A673 (cell line): ENCODE measurements at regions of chr1 and their contacts with region 1.

Region 1: DNA sequence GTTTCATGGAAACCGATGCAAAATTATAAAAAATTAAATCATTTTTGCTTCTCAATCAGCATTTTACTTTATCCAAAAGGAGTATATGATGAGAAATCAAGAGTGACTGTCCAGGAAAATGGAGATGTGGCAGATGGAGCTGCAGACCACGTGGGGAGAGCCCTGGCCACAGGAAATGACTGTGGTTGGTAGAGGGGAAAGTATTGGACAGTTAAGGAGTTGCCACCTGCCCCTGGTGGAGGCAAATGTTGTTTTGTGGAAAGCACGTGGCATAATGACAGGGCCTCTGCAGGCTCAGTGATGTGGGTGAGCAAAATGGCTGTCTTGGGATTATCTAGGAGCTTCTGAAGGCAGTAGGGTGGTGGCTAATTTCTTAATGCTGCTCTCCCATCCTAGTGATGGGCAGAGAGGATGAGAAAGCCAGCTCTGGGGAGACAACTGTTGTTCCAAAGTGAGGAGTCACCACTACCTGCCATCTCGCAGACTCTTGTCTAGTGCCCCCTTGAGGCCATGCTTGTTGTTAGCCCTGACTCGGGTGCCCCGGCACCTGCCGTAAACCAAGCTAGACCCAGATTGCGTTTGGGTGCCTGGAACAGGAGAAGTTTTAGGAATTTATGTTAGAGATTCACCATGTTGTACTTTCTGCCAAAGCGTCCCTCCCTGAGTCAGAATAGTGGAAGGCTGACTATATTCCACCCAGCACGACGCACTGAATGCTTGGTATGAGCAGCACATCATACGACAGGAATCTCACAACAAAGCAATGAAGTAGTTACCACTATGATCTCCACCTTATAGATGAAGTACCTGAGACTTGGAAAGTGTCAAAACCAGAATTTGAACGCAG is 144.0 kb downstream of the ROR1 start:
- DNase-seq: peak; percentile 50
- H3K4me3 ChIP-seq: no peak overlapping the region
- H3K27ac ChIP-seq: no peak overlapping the region
- H3K4me1 ChIP-seq: peaks cover 20% of the 10 kb centered on the region
- H3K27me3 ChIP-seq: no peaks in the 10 kb centered on the region
- CTCF ChIP-seq: peak; percentile 64

Region 2: GRCh38 chr1:63615768-63616420 is 301.9 kb before region 1 on chr1:
- CTCF ChIA-PET with region 1: no interaction called
- POLR2A ChIA-PET with region 1: no interaction called
- intact Hi-C with region 1: loop called (anchors 5 kb)
- DNase-seq: peak; percentile 81
- H3K4me3 ChIP-seq: no peak overlapping the region
- H3K27ac ChIP-seq: no peak overlapping the region
- H3K4me1 ChIP-seq: no peaks in the 10 kb centered on the region
- H3K27me3 ChIP-seq: no peaks in the 10 kb centered on the region
- CTCF ChIP-seq: peak; percentile 73

Region 3: DNA sequence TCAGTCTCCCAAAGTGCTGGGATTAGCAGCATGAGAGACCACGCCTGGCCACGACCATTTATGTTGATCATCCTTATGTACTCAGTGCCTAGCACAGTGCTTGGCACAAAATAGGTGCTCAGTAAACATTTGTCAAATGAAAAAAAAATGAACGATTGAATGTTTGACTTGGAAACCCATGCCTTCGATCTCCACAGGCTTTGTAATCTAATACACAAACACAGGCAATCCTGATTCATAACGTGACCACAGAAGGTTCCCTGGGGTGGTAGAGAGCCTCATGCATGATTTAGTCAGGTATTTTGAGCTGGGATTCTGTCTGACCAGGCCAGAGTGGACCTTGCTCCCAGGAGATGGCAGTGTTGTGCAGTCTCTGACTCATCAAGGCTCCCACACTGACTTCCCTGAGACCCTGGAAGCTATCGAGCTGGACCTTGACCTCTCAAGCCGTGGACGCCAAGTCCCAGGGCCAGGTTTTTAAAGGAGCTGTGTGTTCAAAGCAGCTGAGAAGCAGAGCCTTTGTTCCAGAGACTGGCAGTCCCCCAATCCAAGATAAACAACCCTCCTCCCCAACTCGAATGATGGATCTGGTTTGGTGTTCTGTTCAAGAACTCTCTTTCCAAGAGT is 243.4 kb before region 1 on chr1:
- CTCF ChIA-PET with region 1: interaction called, 14 read pairs
- POLR2A ChIA-PET with region 1: no interaction called
- intact Hi-C with region 1: no loop called
- DNase-seq: peak; percentile 60
- H3K4me3 ChIP-seq: no peak overlapping the region
- H3K27ac ChIP-seq: no peak overlapping the region
- H3K4me1 ChIP-seq: no peaks in the 10 kb centered on the region
- H3K27me3 ChIP-seq: no peaks in the 10 kb centered on the region
- CTCF ChIP-seq: peak; percentile 63

Region 4: DNA sequence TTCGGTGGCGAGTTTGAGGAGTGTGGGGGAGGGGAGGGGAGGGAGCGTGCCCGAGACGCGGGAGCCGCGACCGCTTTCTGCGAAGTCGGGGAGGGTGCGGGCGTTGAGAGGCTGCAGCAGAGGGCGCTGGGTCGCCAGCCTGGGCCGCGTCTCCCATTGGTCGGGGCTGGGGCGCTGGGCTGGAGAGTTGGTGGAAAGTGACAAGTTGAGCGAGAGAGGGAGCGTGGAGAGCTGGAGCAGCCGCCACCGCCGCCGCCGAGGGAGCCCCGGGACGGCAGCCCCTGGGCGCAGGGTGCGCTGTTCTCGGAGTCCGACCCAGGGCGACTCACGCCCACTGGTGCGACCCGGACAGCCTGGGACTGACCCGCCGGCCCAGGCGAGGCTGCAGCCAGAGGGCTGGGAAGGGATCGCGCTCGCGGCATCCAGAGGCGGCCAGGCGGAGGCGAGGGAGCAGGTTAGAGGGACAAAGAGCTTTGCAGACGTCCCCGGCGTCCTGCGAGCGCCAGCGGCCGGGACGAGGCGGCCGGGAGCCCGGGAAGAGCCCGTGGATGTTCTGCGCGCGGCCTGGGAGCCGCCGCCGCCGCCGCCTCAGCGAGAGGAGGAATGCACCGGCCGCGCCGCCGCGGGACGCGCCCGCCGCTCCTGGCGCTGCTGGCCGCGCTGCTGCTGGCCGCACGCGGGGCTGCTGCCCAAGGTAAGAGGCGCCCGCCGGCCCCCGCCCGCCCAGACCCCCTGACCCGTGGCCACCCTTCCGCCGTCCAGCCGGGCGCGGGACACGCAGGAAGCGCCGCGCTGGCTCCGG is 143.8 kb before region 1 on chr1 and contains the start of gene ROR1:
- CTCF ChIA-PET with region 1: no interaction called
- POLR2A ChIA-PET with region 1: no interaction called
- intact Hi-C with region 1: loop called (anchors 5 kb)
- DNase-seq: peak; percentile 93
- H3K4me3 ChIP-seq: peak within 1 kb of the TSS; percentile 80
- H3K27ac ChIP-seq: peak within 1 kb of the TSS; percentile 52
- H3K4me1 ChIP-seq: peaks cover 15% of the 10 kb centered on the region
- H3K27me3 ChIP-seq: no peaks in the 10 kb centered on the region
- CTCF ChIP-seq: peak; percentile 83
- total RNA-seq, gene ROR1: 7.4 and 8.3 TPM in 2 replicates